ENCODE measurements at regions of chr16 and their contacts with region 1.

Region 1: GRCh38 chr16:70395345-70395901 is 43.5 kb downstream of the ST3GAL2 start:
- DNase-seq: peak; percentile 59 to 76
- ATAC-seq: peak; percentile 57 to 88 (median 78)
- H3K4me3 ChIP-seq: no peak overlapping the region
- H3K27ac ChIP-seq: no peak overlapping the region
- H3K4me1 ChIP-seq: peaks cover 4 to 22% (median 18%) of the 10 kb centered on the region in 9 donors
- H3K27me3 ChIP-seq: no peaks in the 10 kb centered on the region
- CTCF ChIP-seq: peak; percentile 35 to 85 (median 73)

Region 2: GRCh38 chr16:70428178-70428998 is 33.0 kb after region 1 on chr16:
- intact Hi-C with region 1: loop called in 1 of 10 experiments (anchors 5 kb)
- DNase-seq: peak; percentile 96
- ATAC-seq: peak; percentile 85 to 94 (median 90)
- H3K4me3 ChIP-seq: peak overlapping the region in 5 of 10 donors; percentile 0 to 12 (median 8)
- H3K27ac ChIP-seq: peak overlapping the region; percentile 68 to 94 (median 88)
- H3K4me1 ChIP-seq: peaks cover 47 to 93% (median 68%) of the 10 kb centered on the region in 9 donors
- H3K27me3 ChIP-seq: no peaks in the 10 kb centered on the region
- CTCF ChIP-seq: no peak

Region 3: DNA sequence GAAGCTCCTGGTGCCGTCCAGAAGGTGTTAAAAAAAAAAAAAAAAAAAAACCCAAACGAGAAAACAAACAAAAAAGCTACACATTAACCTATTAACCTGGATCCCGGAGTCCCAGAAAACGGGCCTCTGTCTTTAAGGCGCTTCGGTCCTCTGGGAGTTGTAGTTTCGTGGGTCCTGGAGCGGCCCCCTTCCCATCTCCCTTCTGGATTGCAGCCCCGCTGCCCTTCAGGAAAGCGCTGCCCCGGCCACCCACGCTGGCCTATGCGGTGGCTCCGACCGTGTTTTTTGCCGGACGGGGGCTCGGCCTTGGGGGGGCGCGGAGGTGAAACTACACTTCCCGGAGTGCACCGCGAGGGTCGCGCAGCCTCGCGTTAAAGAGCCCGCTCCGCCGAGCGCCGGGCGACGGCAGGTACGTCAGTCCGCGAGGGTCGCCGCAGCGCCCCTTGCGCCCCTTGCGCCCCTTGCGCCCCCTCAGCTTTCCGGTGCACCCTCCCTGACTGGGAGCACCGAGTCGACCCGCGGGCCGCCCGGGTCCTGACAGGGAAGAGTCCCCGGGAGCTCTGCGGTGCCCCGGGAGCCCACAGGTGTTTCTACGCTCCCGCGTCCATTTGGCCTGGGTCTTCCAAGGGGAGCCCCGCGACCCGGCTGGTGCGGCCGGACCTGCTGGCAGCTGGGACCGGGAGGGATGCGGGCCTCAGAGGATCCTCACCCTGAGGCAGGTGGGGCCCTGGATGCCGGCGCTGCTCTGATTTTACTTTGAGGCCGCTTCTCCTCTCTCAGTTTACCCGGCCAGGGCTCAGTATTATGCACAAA is 59.0 kb after region 1 on chr16 and contains the start of gene FCSK:
- intact Hi-C with region 1: loop called in 1 of 10 experiments (anchors 5 kb)
- DNase-seq: peak; percentile 56 to 73
- ATAC-seq: peak; percentile 90 to 94 (median 93)
- H3K4me3 ChIP-seq: peak within 1 kb of the TSS; percentile 84 to 100 (median 93)
- H3K27ac ChIP-seq: peak within 1 kb of the TSS; percentile 85 to 100 (median 96)
- H3K4me1 ChIP-seq: peaks cover 0 to 22% (median 17%) of the 10 kb centered on the region in 9 donors
- H3K27me3 ChIP-seq: peaks cover 0 to 12% (median 0%) of the 10 kb centered on the region in 7 donors
- CTCF ChIP-seq: peak in 1 of 9 donors; percentile 18
- total RNA-seq, gene FCSK: 6.5 to 12.6 (median 9.0) TPM

Region 4: DNA sequence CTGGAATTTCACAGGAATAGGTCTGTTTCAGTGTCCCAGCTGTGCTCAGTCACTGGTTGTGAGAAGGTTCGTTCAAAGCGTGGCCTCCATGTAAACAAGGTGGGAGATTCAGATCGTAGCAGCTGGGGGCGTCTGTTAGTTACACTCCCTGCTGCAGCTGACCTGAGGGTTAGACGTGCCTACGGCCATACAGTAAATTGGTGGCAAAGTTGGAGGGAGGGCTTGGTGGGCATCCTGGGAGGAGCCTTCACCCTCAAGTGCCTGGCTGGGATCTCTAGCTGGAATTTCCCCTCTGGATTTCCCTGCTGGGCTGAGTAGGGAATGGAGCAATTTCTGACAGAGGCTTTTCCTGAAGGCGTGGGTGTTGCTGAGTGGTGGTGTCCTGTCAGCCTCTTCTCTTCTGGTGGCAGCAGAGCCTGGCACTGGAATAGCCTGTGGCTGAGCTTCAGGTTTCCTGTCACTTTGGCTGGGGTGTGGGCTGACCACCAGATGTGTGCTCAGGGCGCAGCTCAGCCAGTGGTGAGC is 65.4 kb after region 1 on chr16:
- intact Hi-C with region 1: loop called in 2 of 10 experiments (anchors 5 to 10 kb)
- DNase-seq: no peak
- ATAC-seq: peak in 7 of 8 donors; percentile 49 to 90 (median 77)
- H3K4me3 ChIP-seq: no peak overlapping the region
- H3K27ac ChIP-seq: peak overlapping the region in 2 of 10 donors; percentile 13 to 36
- H3K4me1 ChIP-seq: peaks cover 0 to 20% (median 11%) of the 10 kb centered on the region in 9 donors
- H3K27me3 ChIP-seq: no peaks in the 10 kb centered on the region
- CTCF ChIP-seq: peak in 1 of 9 donors; percentile 10

Region 5: DNA sequence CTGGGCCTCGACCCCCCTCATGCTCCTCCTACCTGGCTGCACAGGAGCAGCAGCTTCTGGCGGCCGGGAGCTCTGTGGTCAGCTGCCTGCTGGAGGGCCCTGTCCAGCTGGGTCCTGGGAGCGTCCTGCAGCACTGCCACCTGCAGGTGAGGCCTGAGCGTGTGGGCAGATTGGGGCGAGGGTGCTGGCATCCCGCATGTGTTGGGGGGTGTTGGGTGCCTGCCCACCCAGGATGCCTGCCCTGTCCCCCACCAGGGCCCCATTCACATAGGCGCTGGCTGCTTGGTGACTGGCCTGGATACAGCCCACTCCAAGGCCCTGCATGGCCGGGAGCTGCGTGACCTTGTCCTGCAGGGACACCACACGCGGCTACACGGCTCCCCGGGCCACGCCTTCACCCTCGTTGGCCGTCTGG is 75.5 kb after region 1 on chr16:
- intact Hi-C with region 1: loop called in 5 of 10 experiments (anchors 5 to 10 kb)
- DNase-seq: peak in 1 of 2 donors; percentile 43
- ATAC-seq: peak; percentile 32 to 70 (median 58)
- H3K4me3 ChIP-seq: no peak overlapping the region
- H3K27ac ChIP-seq: no peak overlapping the region
- H3K4me1 ChIP-seq: no peaks in the 10 kb centered on the region
- H3K27me3 ChIP-seq: no peaks in the 10 kb centered on the region
- CTCF ChIP-seq: peak; percentile 16 to 62 (median 50)

Measured in heart right ventricle (tissue), 16 donors.